ENCODE measurements at regions of chr10 and their contacts with region 1.

Region 1: DNA sequence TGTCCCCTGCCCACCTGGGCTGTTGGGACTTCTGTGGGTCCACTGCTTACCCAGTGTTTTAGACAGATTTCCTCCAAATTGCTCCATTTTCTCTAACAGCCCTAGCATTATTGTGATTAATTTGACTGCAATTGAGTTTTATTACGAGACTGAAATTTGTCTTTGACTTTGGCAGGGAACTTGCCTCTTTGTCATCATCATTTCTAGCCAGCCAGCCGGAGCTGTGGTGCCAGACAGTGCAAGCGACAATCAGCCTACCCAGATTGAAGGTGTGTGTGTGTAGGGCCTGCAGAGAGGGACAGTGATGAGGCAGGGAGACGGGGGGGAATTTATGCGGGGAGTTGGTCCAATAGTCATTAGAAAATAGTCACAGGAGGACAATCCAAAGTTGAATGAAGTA is 743.0 kb downstream of the NRG3 start:
- DNase-seq: no peak
- ATAC-seq: no peak
- H3K4me3 ChIP-seq: no peak overlapping the region
- H3K4me3 Mint-ChIP-seq: no peak overlapping the region
- H3K27ac ChIP-seq: no peak overlapping the region
- H3K27ac Mint-ChIP-seq: no peak overlapping the region
- H3K4me1 ChIP-seq: no peaks in the 10 kb centered on the region
- H3K4me1 Mint-ChIP-seq: no peaks in the 10 kb centered on the region
- H3K27me3 ChIP-seq: no peaks in the 10 kb centered on the region
- H3K27me3 Mint-ChIP-seq: no peaks in the 10 kb centered on the region
- CTCF ChIP-seq: no peak

Region 2: GRCh38 chr10:82150120-82150900 is 467.7 kb before region 1 on chr10:
- CTCF ChIA-PET with region 1: no interaction called
- POLR2A ChIA-PET with region 1: no interaction called
- intact Hi-C with region 1: no loop called
- DNase-seq: peak in 1 of 9 experiments; percentile 4
- ATAC-seq: no peak
- H3K4me3 ChIP-seq: no peak overlapping the region
- H3K4me3 Mint-ChIP-seq: no peak overlapping the region
- H3K27ac ChIP-seq: no peak overlapping the region
- H3K27ac Mint-ChIP-seq: no peak overlapping the region
- H3K4me1 ChIP-seq: no peaks in the 10 kb centered on the region
- H3K4me1 Mint-ChIP-seq: no peaks in the 10 kb centered on the region
- H3K27me3 ChIP-seq: no peaks in the 10 kb centered on the region
- H3K27me3 Mint-ChIP-seq: no peaks in the 10 kb centered on the region
- CTCF ChIP-seq: no peak

Region 3: GRCh38 chr10:82597840-82598239 is 20.2 kb before region 1 on chr10:
- CTCF ChIA-PET with region 1: no interaction called
- POLR2A ChIA-PET with region 1: no interaction called
- intact Hi-C with region 1: loop called in 1 of 2 experiments (anchors 2 kb)
- DNase-seq: no peak
- ATAC-seq: no peak
- H3K4me3 ChIP-seq: no peak overlapping the region
- H3K4me3 Mint-ChIP-seq: no peak overlapping the region
- H3K27ac ChIP-seq: no peak overlapping the region
- H3K27ac Mint-ChIP-seq: no peak overlapping the region
- H3K4me1 ChIP-seq: no peaks in the 10 kb centered on the region
- H3K4me1 Mint-ChIP-seq: no peaks in the 10 kb centered on the region
- H3K27me3 ChIP-seq: no peaks in the 10 kb centered on the region
- H3K27me3 Mint-ChIP-seq: no peaks in the 10 kb centered on the region
- CTCF ChIP-seq: no peak

Measured in CD8-positive, alpha-beta T cell (primary cell).